Heart left ventricle (tissue), 16 donors: ENCODE measurements at regions of chr19 and their contacts with region 1.

Region 1: DNA sequence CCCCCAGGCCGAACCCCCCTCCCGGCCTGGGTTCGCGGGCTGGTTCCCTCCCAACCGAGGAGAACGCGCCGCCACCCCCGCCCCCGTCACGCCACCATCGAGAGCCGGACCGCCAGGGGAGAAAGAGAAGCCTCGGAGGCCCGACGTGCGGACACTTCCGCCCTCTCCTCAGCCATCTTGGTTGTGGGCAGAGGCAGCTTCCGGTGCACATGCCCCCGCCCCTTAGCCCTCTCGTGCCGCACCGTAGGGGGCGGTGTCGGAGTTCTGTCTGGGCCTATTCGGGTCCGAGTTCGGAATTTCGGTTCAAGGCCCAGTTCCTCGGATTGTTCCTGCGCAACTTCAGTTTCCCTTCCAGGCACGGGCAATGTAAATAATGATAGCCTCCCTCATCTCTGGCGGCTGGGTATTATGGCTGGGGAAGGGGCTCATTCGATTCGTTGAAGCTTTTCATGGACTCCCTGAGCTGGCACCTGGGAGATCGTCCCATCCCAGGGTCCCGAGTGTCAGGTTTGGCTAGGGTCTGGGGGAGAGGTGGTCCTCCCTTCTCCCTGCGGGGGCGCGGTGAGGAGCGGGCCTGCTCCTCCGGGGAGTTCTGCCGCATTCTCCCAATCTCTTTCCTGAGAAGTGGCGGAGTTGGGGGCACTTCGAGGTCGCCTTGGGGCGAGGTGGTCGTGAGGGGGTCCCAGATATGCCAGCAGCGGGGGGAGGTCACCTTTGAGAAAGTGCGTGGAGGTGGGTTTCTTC is at the starts of genes IER2 and STX10:
- DNase-seq: peak; percentile 97 to 98 (median 97)
- ATAC-seq: peak; percentile 73 to 78 (median 78)
- H3K4me3 ChIP-seq: peak within 1 kb of the TSS; percentile 45 to 98 (median 91)
- H3K27ac ChIP-seq: peak within 1 kb of the TSS; percentile 87 to 100 (median 98)
- H3K4me1 ChIP-seq: peaks cover 0 to 35% (median 14%) of the 10 kb centered on the region in 12 donors
- H3K27me3 ChIP-seq: no peaks in the 10 kb centered on the region
- CTCF ChIP-seq: peak; percentile 44 to 85 (median 64)
- POLR2A ChIP-seq: peak in 1 of 2 donors; percentile 76
- total RNA-seq, gene IER2: 17.6 to 101 (median 29.1) TPM
- total RNA-seq, gene STX10: 24.0 to 48.8 (median 35.8) TPM

Region 2: DNA sequence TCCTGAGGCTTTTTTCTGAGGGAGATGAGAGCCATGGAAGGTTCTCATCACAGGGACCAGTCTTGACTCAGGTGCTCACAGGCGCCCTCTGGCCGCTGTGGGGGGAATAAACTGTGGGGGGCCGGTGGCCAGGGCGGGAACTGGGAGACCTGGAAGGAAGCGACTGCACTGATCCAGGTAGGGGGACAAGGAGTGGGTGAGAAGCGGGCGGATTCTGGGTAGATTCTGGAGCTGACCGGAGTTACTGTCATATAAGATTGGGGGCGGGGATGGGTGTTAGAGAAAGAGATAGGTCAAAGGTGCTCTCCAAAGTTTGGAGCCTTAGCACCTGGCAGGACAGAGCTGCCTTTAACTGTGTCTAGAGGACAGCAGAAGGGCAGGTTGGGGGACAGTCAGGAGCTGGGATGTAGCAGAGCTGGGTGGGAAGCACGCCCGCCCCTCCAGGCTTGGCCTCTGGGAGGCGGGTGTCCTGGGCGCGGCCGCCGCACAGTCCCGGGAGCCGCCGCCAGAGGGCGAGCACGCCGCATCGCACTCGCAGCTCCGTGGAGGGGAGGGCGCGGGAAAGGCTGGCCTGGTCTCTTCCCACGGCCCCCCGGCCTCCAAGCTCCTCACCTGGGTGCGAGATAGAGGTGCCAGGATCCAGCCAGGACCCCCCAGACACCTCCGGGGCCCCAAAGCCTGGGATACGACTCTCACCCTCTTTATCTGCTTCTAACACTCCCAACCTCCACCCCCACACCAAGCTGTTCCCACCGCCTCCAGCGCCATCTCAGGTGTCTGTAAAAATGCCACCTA is 185.1 kb before region 1 on chr19:
- intact Hi-C with region 1: loop called in 1 of 10 experiments (anchors 5 kb)
- DNase-seq: peak; percentile 75 to 91 (median 84)
- ATAC-seq: peak; percentile 68 to 91 (median 88)
- H3K4me3 ChIP-seq: peak overlapping the region in 11 of 12 donors; percentile 30 to 66 (median 56)
- H3K27ac ChIP-seq: peak overlapping the region in 10 of 12 donors; percentile 6 to 73 (median 55)
- H3K4me1 ChIP-seq: peaks cover 0 to 14% (median 5%) of the 10 kb centered on the region in 12 donors
- H3K27me3 ChIP-seq: no peaks in the 10 kb centered on the region
- CTCF ChIP-seq: peak; percentile 76 to 96 (median 89)
- POLR2A ChIP-seq: peak in 1 of 2 donors; percentile 41

Region 3: GRCh38 chr19:13117772-13118423 is 32.5 kb before region 1 on chr19 and contains the start of gene NACC1:
- intact Hi-C with region 1: loop called in 5 of 10 experiments (anchors 2 to 5 kb)
- DNase-seq: peak; percentile 91 to 95 (median 93)
- ATAC-seq: peak; percentile 84 to 95 (median 94)
- H3K4me3 ChIP-seq: peak within 1 kb of the TSS; percentile 84 to 100 (median 97)
- H3K27ac ChIP-seq: peak within 1 kb of the TSS; percentile 10 to 88 (median 76)
- H3K4me1 ChIP-seq: peaks cover 5 to 53% (median 35%) of the 10 kb centered on the region in 12 donors
- H3K27me3 ChIP-seq: no peaks in the 10 kb centered on the region
- CTCF ChIP-seq: no peak
- POLR2A ChIP-seq: no peak
- total RNA-seq, gene NACC1: 28.7 to 88.2 (median 41.8) TPM

Region 4: GRCh38 chr19:13190781-13191540 is 40.6 kb after region 1 on chr19:
- intact Hi-C with region 1: no loop called
- DNase-seq: no peak
- ATAC-seq: peak in 1 of 4 donors; percentile 12
- H3K4me3 ChIP-seq: no peak overlapping the region
- H3K27ac ChIP-seq: no peak overlapping the region
- H3K4me1 ChIP-seq: peaks cover 0 to 18% (median 0%) of the 10 kb centered on the region in 12 donors
- H3K27me3 ChIP-seq: no peaks in the 10 kb centered on the region
- CTCF ChIP-seq: no peak
- POLR2A ChIP-seq: no peak

Region 5: GRCh38 chr19:13262450-13262849 is 112.1 kb after region 1 on chr19:
- intact Hi-C with region 1: loop called in 2 of 10 experiments (anchors 5 kb)
- DNase-seq: no peak
- ATAC-seq: peak; percentile 26 to 67 (median 57)
- H3K4me3 ChIP-seq: no peak overlapping the region
- H3K27ac ChIP-seq: no peak overlapping the region
- H3K4me1 ChIP-seq: peaks cover 0 to 18% (median 0%) of the 10 kb centered on the region in 12 donors
- H3K27me3 ChIP-seq: peaks cover 0 to under 1% (median 0%) of the 10 kb centered on the region in 9 donors
- CTCF ChIP-seq: peak; percentile 40 to 73 (median 60)
- POLR2A ChIP-seq: no peak

Region 6: DNA sequence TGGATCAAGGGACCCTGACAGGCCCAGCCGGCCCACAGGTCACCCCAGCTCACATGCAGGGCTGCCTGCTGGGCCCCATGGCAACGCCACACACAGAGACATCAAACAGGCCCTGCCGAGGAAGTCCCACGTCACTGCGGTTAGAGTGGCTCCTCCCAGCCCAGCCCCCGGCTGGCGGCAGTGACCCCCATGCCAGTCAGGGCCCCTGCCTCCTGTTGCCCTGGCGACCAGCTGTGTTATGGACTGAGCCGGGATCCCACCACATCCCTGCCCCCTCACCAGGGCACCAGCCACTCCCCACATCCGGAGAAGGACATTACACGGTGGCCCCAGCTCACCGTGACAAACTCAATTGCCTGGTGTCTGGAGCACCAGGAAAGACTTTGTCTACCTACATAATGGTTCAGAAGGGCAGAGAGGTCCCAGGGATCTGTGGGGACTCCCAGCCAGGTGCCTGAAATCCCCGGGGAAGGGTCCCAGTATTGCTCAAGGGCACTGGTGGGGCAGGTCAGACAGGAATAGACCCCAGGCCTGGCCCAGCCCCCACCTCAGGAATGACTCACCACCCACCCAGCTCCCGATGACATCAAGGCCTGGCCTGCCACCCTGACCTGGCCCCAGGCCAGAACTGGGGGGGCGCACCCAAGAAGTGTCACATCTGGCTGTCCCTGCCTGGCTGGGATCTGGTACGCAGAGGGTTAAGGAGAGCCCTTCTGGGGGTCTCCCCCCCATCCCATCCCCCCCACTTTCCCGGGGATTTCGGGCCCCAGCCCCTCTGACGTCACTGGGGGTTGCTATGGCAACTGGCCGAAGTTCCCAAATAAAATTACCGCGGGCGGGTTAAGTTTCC is 696.4 kb after region 1 on chr19:
- intact Hi-C with region 1: loop called in 2 of 10 experiments (anchors 5 to 10 kb)
- DNase-seq: peak; percentile 92 to 96 (median 94)
- ATAC-seq: peak; percentile 62 to 76 (median 68)
- H3K4me3 ChIP-seq: peak overlapping the region; percentile 22 to 65 (median 58)
- H3K27ac ChIP-seq: peak overlapping the region; percentile 96 to 100 (median 100)
- H3K4me1 ChIP-seq: peaks cover 20 to 86% (median 67%) of the 10 kb centered on the region in 12 donors
- H3K27me3 ChIP-seq: no peaks in the 10 kb centered on the region
- CTCF ChIP-seq: no peak
- POLR2A ChIP-seq: peak in 1 of 2 donors; percentile 52